ENCODE measurements at regions of chr5 and their contacts with region 1.

Region 1: DNA sequence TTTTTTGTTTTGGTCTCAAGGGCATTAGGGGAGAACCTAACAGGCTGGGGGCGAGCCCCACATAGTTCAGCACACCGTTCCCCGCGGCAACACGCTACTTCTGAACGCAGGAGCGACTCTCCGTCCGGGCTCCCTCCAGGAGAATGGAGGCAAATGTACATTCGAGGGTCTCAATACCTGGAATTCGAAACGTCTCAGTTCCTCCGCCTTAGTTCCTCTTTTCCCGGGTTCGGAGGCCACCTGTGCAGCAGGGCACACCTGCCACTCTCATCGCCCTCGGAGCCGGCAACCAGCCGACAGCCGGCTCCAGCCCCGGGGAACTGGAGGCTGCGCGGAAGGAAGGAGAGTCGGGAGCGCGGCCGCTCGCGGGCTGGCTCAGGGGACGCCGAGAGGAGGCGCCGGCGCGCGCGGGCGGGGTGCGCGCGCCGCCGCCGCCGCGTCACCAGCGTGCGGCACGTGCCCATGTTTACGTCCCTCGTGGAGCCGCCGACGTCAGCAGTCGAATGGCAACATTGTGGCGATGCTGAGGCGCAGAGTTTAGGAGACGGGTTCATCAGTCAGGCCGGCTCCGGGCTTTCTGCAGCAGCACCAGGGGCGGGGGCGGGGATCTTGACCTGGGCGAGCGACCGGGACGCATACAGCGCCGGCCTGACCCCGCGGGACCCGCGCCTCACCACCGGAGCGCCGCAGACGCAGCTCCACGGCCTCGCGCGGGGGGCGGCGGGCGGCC is at the start of gene JMY:
- DNase-seq: peak; percentile 74 to 90
- H3K4me3 ChIP-seq: peak within 1 kb of the TSS; percentile 70 to 91
- H3K27ac ChIP-seq: peak within 1 kb of the TSS; percentile 72 to 94
- H3K4me1 ChIP-seq: peaks cover 5 to 10% of the 10 kb centered on the region in 2 donors
- H3K27me3 ChIP-seq: no peaks in the 10 kb centered on the region
- CTCF ChIP-seq: peak in 2 of 3 experiments; percentile 8 to 17
- total RNA-seq, gene JMY: 5.2 TPM

Region 2: DNA sequence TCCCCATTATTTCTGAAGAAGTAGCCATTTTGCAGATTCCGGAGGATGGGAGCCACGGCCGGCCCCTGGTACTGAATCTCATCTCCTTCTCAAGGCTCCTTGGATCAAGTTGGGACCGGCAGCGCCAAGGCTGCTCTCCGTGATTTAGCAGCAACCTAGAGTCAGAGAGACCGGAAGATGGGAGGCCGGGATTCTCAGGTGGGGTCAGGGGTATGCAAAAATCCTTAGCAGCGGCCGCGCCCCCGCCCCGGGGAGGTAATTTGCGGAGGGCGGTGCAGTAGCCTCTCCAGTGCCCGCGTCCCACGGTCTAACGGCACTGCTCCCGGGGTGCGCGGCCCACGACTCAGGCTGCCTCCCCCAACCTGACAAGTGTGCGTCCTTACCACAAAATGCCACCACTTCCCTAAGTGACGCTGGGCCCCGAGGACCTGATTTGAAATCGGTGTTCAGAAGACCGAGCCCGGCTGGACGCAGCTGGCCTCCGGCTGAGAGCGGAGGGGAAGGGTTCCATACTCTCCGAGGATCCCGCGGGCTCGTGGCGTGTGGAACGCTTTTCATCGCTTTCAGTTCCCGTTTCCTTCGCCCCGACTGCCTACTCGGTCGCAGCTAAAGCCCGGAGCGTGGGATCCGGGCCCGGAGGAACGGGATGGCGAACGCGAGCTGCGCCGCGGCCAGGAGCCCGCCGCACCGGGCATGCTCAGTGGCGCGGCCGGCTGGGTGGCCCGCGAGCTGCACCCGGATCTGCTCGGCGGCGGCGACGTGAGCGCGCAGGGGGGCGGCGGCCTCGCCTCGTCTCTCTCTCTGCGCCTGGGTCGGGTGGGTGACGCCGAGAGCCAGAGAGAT is 875.7 kb before region 1 on chr5 and contains the start of gene SCAMP1:
- intact Hi-C with region 1: loop called (anchors 5 kb)
- DNase-seq: peak; percentile 71 to 95
- H3K4me3 ChIP-seq: peak within 1 kb of the TSS; percentile 82 to 96
- H3K27ac ChIP-seq: peak within 1 kb of the TSS; percentile 86 to 90
- H3K4me1 ChIP-seq: peaks cover 0 to 17% of the 10 kb centered on the region in 2 donors
- H3K27me3 ChIP-seq: no peaks in the 10 kb centered on the region
- CTCF ChIP-seq: peak; percentile 30 to 63 (median 30)
- total RNA-seq, gene SCAMP1: 15.0 TPM

Region 3: GRCh38 chr5:78984439-78985115 is 251.2 kb before region 1 on chr5:
- intact Hi-C with region 1: loop called (anchors 5 kb)
- DNase-seq: peak; percentile 52 to 92
- H3K4me3 ChIP-seq: peak overlapping the region; percentile 89 to 95
- H3K27ac ChIP-seq: peak overlapping the region; percentile 96
- H3K4me1 ChIP-seq: peaks cover 0 to 12% of the 10 kb centered on the region in 2 donors
- H3K27me3 ChIP-seq: no peaks in the 10 kb centered on the region
- CTCF ChIP-seq: peak; percentile 28 to 48 (median 40)

Region 4: GRCh38 chr5:79612667-79613198 is 376.9 kb after region 1 on chr5:
- intact Hi-C with region 1: loop called (anchors 1 kb)
- DNase-seq: no peak
- H3K4me3 ChIP-seq: peak overlapping the region; percentile 87 to 99
- H3K27ac ChIP-seq: peak overlapping the region; percentile 95 to 96
- H3K4me1 ChIP-seq: peaks cover 0 to 9% of the 10 kb centered on the region in 2 donors
- H3K27me3 ChIP-seq: no peaks in the 10 kb centered on the region
- CTCF ChIP-seq: no peak

Measured in ascending aorta (tissue), 2 donors.